CD4-positive, alpha-beta T cell (primary cell): ENCODE measurements at regions of chr3 and their contacts with region 1.

Region 1: GRCh38 chr3:10522646-10523303 is 17.4 kb upstream of the ATP2B2 start:
- DNase-seq: peak in 1 of 14 experiments; percentile 12
- ATAC-seq: no peak
- H3K4me3 ChIP-seq: no peak overlapping the region
- H3K4me3 Mint-ChIP-seq: no peak overlapping the region
- H3K27ac ChIP-seq: no peak overlapping the region
- H3K27ac Mint-ChIP-seq: no peak overlapping the region
- H3K4me1 ChIP-seq: no peaks in the 10 kb centered on the region
- H3K4me1 Mint-ChIP-seq: no peaks in the 10 kb centered on the region
- H3K27me3 ChIP-seq: peaks cover 6 to 15% of the 10 kb centered on the region in 2 experiments
- H3K27me3 Mint-ChIP-seq: peaks cover 45% of the 10 kb centered on the region
- CTCF ChIP-seq: no peak

Region 2: GRCh38 chr3:10349801-10350200 is 173.0 kb before region 1 on chr3:
- CTCF ChIA-PET with region 1: no interaction called
- POLR2A ChIA-PET with region 1: no interaction called
- intact Hi-C with region 1: loop called in 1 of 2 experiments (anchors 5 kb)
- DNase-seq: no peak
- ATAC-seq: no peak
- H3K4me3 ChIP-seq: no peak overlapping the region
- H3K4me3 Mint-ChIP-seq: no peak overlapping the region
- H3K27ac ChIP-seq: no peak overlapping the region
- H3K27ac Mint-ChIP-seq: no peak overlapping the region
- H3K4me1 ChIP-seq: peaks cover 7% of the 10 kb centered on the region
- H3K4me1 Mint-ChIP-seq: peaks cover 5% of the 10 kb centered on the region
- H3K27me3 ChIP-seq: peaks cover 0 to 3% of the 10 kb centered on the region in 2 experiments
- H3K27me3 Mint-ChIP-seq: no peaks in the 10 kb centered on the region
- CTCF ChIP-seq: no peak

Region 3: DNA sequence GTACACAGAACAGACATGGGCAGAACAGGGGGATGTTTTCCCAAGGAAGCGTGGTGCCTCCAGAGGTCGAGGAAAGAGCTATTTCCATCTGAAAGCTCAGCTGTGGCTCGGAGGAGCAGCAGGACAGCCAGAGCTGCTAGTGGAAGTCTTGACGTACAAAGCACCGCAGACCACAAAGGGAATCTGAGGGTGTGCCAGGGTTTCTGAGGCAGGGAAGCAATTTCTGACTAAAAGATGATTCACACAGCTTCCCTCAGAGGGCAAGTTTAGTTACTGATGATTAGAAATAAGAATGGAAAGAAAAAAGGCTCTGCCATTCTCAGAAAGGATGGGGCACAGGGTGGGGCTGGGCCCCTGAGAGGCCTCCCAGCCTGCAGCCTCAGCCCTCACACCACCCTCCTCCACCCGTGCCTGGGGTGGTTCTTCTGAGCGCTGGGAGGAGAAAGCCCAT is 156.1 kb before region 1 on chr3:
- CTCF ChIA-PET with region 1: no interaction called
- POLR2A ChIA-PET with region 1: no interaction called
- intact Hi-C with region 1: no loop called
- DNase-seq: peak in 1 of 14 experiments; percentile 31
- ATAC-seq: peak; percentile 39
- H3K4me3 ChIP-seq: no peak overlapping the region
- H3K4me3 Mint-ChIP-seq: no peak overlapping the region
- H3K27ac ChIP-seq: no peak overlapping the region
- H3K27ac Mint-ChIP-seq: no peak overlapping the region
- H3K4me1 ChIP-seq: peaks cover 8% of the 10 kb centered on the region
- H3K4me1 Mint-ChIP-seq: no peaks in the 10 kb centered on the region
- H3K27me3 ChIP-seq: peaks cover 0 to 3% of the 10 kb centered on the region in 2 experiments
- H3K27me3 Mint-ChIP-seq: peaks cover 6% of the 10 kb centered on the region
- CTCF ChIP-seq: no peak

Region 4: DNA sequence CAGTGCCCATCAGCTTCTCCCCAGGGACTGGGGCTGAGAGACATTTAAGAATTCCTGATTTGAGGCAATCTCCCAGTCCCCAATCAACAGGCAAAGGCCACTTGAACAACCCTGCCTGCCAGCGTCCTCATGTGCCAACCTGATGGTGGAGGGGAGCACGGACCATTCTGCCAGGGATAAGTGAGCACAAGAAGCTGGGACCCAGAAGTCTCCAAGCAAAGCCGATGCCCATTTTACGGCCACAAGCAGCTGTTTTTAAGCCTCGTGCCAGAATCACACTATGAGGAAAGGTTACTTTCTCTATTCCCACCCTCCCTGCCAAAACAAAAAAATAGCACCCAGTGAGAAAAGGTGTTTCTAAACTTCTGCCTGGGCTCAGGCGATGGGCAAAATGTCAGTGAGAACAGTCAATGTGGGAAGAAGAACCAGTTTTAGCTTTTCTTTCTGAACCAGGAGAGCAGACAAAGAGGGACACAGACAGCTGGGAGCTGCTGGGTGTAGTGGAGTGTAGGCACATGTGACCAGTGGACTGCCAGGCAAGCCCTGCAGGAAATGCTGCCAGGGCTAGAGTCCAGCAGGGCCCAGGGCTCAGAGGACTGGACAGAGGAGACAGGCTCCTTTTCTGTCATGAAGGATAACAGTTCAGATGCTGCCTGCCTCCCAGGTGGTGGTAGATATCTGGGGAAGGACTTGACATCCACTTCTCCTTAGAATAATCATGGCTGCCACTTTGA is 75.1 kb before region 1 on chr3:
- CTCF ChIA-PET with region 1: no interaction called
- POLR2A ChIA-PET with region 1: no interaction called
- intact Hi-C with region 1: no loop called
- DNase-seq: no peak
- ATAC-seq: no peak
- H3K4me3 ChIP-seq: no peak overlapping the region
- H3K4me3 Mint-ChIP-seq: no peak overlapping the region
- H3K27ac ChIP-seq: no peak overlapping the region
- H3K27ac Mint-ChIP-seq: no peak overlapping the region
- H3K4me1 ChIP-seq: no peaks in the 10 kb centered on the region
- H3K4me1 Mint-ChIP-seq: no peaks in the 10 kb centered on the region
- H3K27me3 ChIP-seq: no peaks in the 10 kb centered on the region
- H3K27me3 Mint-ChIP-seq: peaks cover 14% of the 10 kb centered on the region
- CTCF ChIP-seq: no peak

Region 5: GRCh38 chr3:11898611-11899325 is 1376.0 kb after region 1 on chr3:
- CTCF ChIA-PET with region 1: no interaction called
- POLR2A ChIA-PET with region 1: no interaction called
- intact Hi-C with region 1: no loop called
- DNase-seq: no peak
- ATAC-seq: no peak
- H3K4me3 ChIP-seq: no peak overlapping the region
- H3K4me3 Mint-ChIP-seq: no peak overlapping the region
- H3K27ac ChIP-seq: no peak overlapping the region
- H3K27ac Mint-ChIP-seq: no peak overlapping the region
- H3K4me1 ChIP-seq: no peaks in the 10 kb centered on the region
- H3K4me1 Mint-ChIP-seq: no peaks in the 10 kb centered on the region
- H3K27me3 ChIP-seq: peaks cover 0 to 2% of the 10 kb centered on the region in 2 experiments
- H3K27me3 Mint-ChIP-seq: peaks cover 10% of the 10 kb centered on the region
- CTCF ChIP-seq: no peak